ENCODE measurements at regions of chr12 and their contacts with region 1.

Region 1: GRCh38 chr12:22334410-22335290 is at the start of gene ST8SIA1:
- DNase-seq: peak; percentile 32
- H3K4me3 ChIP-seq: peak within 1 kb of the TSS; percentile 55 to 64
- H3K27ac ChIP-seq: peak within 1 kb of the TSS; percentile 72 to 81
- H3K4me1 ChIP-seq: no peaks in the 10 kb centered on the region
- H3K27me3 ChIP-seq: no peaks in the 10 kb centered on the region
- CTCF ChIP-seq: no peak
- POLR2A ChIP-seq: no peak
- total RNA-seq, gene ST8SIA1: 17.7 to 18.8 TPM

Region 2: DNA sequence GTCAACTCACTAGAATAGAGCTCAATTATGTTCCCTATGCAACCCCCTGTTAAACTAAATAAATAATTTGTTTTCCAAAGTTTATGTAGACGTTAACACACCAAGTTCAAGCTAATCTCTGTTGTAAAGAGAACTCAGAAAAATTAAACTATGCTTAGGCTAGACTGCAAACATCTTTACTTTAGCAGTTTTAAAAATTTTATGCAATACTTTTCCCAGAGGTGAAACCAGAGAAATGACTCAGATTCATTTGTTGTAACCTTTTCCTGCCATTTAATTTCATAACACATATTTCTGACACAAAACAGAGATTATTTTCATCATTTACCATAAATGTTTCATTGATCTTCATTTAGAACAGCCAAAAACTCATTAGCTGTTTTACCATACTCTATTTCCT is 420.8 kb before region 1 on chr12:
- intact Hi-C with region 1: no loop called
- DNase-seq: no peak
- H3K4me3 ChIP-seq: no peak overlapping the region
- H3K27ac ChIP-seq: no peak overlapping the region
- H3K4me1 ChIP-seq: no peaks in the 10 kb centered on the region
- H3K27me3 ChIP-seq: no peaks in the 10 kb centered on the region
- CTCF ChIP-seq: no peak
- POLR2A ChIP-seq: no peak

Region 3: GRCh38 chr12:22083167-22083566 is 251.5 kb before region 1 on chr12:
- intact Hi-C with region 1: loop called (anchors 1 kb)
- DNase-seq: peak; percentile 20
- H3K4me3 ChIP-seq: no peak overlapping the region
- H3K27ac ChIP-seq: no peak overlapping the region
- H3K4me1 ChIP-seq: no peaks in the 10 kb centered on the region
- H3K27me3 ChIP-seq: no peaks in the 10 kb centered on the region
- CTCF ChIP-seq: peak; percentile 16 to 75 (median 64)
- POLR2A ChIP-seq: no peak

Region 4: GRCh38 chr12:22100958-22101748 is 233.5 kb before region 1 on chr12:
- intact Hi-C with region 1: loop called (anchors 5 kb)
- DNase-seq: peak; percentile 46
- H3K4me3 ChIP-seq: no peak overlapping the region
- H3K27ac ChIP-seq: no peak overlapping the region
- H3K4me1 ChIP-seq: no peaks in the 10 kb centered on the region
- H3K27me3 ChIP-seq: no peaks in the 10 kb centered on the region
- CTCF ChIP-seq: peak in 3 of 4 experiments; percentile 49 to 62 (median 60)
- POLR2A ChIP-seq: no peak

Region 5: DNA sequence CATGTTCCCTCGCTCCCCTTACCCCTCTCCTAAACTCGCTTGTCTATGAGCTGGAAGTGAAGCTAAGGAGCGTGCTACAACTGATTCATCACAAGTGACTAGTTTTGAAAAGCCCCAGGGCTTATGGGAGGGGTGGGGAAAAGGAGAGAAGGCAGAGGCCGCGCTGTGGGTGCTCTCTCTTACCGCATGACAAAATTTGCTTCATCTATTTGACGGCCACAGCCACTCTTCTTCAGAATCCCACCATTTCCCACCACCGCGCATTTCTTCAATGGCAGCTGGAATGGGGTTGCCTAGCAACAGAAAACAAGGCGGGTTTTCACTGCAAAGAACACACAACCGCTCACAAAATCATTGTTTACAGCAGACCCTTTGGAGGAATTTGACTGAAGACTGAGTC is 79.6 kb before region 1 on chr12:
- intact Hi-C with region 1: loop called (anchors 5 kb)
- DNase-seq: no peak
- H3K4me3 ChIP-seq: no peak overlapping the region
- H3K27ac ChIP-seq: no peak overlapping the region
- H3K4me1 ChIP-seq: no peaks in the 10 kb centered on the region
- H3K27me3 ChIP-seq: no peaks in the 10 kb centered on the region
- CTCF ChIP-seq: no peak
- POLR2A ChIP-seq: no peak

Region 6: GRCh38 chr12:22275846-22276245 is 58.8 kb before region 1 on chr12:
- intact Hi-C with region 1: loop called (anchors 5 kb)
- DNase-seq: peak; percentile 58
- H3K4me3 ChIP-seq: no peak overlapping the region
- H3K27ac ChIP-seq: peak overlapping the region in 1 of 2 donors; percentile 37
- H3K4me1 ChIP-seq: no peaks in the 10 kb centered on the region
- H3K27me3 ChIP-seq: no peaks in the 10 kb centered on the region
- CTCF ChIP-seq: no peak
- POLR2A ChIP-seq: no peak

Region 7: GRCh38 chr12:22443379-22444316 is 109.0 kb after region 1 on chr12:
- intact Hi-C with region 1: loop called (anchors 2 kb)
- DNase-seq: peak; percentile 82
- H3K4me3 ChIP-seq: no peak overlapping the region
- H3K27ac ChIP-seq: no peak overlapping the region
- H3K4me1 ChIP-seq: no peaks in the 10 kb centered on the region
- H3K27me3 ChIP-seq: no peaks in the 10 kb centered on the region
- CTCF ChIP-seq: peak; percentile 14 to 79 (median 75)
- POLR2A ChIP-seq: no peak